Activated CD4-positive, alpha-beta T cell treated with anti-CD3 and anti-CD28 coated beads, Interleukin-2, amount 10 ng/mL, durations not matched to agents 24 days and 14 days (primary cell): ENCODE measurements at regions of chr3 and their contacts with region 1.

Region 1: GRCh38 chr3:29171043-29171990 is 109.6 kb upstream of the RBMS3 start:
- DNase-seq: peak; percentile 76
- H3K4me3 Mint-ChIP-seq: peak overlapping the region; percentile 64
- H3K27ac Mint-ChIP-seq: peak overlapping the region; percentile 82
- H3K4me1 Mint-ChIP-seq: peaks cover 16% of the 10 kb centered on the region
- H3K27me3 Mint-ChIP-seq: no peaks in the 10 kb centered on the region

Region 2: DNA sequence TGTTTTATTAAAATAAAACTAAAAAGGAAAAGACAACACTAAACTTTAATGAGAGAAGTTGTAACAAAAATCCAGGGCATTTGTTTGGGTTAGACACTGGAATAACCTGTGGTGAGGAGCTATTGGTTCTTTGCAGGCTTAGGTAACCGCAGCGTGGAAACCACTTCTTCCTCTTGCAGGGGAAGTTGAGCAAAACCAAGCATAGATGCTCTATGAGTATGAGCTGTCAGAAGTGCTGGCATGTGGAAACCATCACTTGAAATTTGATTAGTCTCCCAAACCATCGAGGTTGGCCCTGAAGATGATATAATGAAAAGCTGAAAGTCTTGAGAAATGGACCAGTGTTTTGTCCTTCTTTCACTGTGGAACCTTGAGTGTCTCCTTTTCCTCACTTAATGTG is 17.5 kb before region 1 on chr3:
- intact Hi-C with region 1: loop called (anchors 2 kb)
- DNase-seq: peak; percentile 86
- H3K4me3 Mint-ChIP-seq: no peak overlapping the region
- H3K27ac Mint-ChIP-seq: no peak overlapping the region
- H3K4me1 Mint-ChIP-seq: peaks cover 13% of the 10 kb centered on the region
- H3K27me3 Mint-ChIP-seq: peaks cover 16% of the 10 kb centered on the region